ENCODE measurements at regions of chr15 and their contacts with region 1.

Region 1: DNA sequence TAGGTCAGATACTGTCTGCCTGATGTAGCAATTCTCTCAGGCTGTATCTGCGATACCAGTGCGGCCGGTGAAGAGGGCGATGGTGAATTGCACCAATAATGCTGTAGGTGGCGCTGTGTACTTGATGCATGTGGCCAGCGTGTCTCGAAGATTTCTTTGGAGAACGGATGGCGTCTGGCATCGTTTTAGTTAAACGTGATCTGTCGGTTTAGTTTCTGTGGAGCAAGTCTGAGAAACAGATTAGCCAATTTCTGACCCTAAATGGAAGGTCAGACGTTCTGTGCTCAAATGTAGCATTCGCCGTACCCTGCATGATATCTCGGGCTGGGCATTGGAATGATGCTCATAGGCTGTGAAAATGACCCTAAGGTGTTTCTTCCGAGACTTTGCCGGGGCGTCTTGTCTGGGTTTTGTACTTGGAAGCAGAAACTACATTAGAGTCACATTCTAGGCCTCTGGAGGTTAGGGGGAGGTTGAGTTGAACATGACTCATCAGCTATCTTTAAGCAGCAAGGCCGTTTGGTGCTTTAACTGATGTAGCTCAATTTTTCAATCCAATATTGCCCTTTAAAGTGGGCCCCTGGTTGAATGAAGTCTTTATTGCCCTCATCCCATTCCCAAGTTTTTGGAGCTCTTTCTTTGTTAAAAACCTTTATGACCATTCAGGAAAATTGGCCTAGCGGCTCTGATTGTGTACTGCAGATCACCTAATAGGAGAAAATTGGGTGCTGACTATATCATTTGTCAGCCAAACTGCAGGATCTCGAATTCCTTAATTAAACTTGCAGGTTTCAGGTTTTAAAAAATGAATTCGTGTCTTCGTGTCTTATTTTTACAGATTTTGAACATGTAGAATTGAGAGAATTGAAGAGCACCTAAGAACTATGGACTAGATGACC is 80.0 kb downstream of the SQOR start:
- DNase-seq: peak; percentile 69
- H3K4me3 ChIP-seq: peak overlapping the region in 1 of 3 experiments; percentile 29
- H3K27ac ChIP-seq: no peak overlapping the region
- H3K4me1 ChIP-seq: peaks cover 7% of the 10 kb centered on the region
- H3K27me3 ChIP-seq: no peaks in the 10 kb centered on the region
- CTCF ChIP-seq: peak; percentile 85 to 92
- POLR2A ChIP-seq: no peak

Region 2: DNA sequence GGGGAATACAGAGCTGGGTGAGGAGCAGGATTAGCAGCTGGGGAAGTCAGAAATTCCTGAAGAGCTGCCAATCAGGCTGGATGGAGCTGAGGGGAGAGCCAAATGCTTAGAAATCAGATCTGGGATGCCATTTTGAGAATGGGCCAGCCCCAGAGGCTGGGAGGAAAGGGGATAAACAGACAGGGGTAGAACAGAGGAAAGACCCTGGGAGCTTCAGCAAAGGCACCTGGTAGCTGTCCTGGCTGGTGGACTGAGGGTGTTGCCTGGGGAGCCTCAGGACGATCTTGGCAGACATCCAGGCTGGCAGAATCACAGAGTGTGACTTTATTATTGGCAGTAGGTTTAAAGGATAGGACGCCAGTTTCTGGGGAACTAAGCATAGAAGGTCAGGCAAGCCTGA is 17.8 kb after region 1 on chr15:
- CTCF ChIA-PET with region 1: interaction called, 11 read pairs
- POLR2A ChIA-PET with region 1: no interaction called
- dilution Hi-C with region 1: no loop called
- intact Hi-C with region 1: no loop called
- DNase-seq: no peak
- H3K4me3 ChIP-seq: no peak overlapping the region
- H3K27ac ChIP-seq: no peak overlapping the region
- H3K4me1 ChIP-seq: no peaks in the 10 kb centered on the region
- H3K27me3 ChIP-seq: peaks cover 3% of the 10 kb centered on the region in 2 experiments
- CTCF ChIP-seq: no peak
- POLR2A ChIP-seq: no peak

Region 3: GRCh38 chr15:45790325-45790943 is 75.6 kb after region 1 on chr15:
- CTCF ChIA-PET with region 1: interaction called, 14 read pairs
- POLR2A ChIA-PET with region 1: no interaction called
- dilution Hi-C with region 1: no loop called
- intact Hi-C with region 1: loop called (anchors 1 kb)
- DNase-seq: peak; percentile 25
- H3K4me3 ChIP-seq: no peak overlapping the region
- H3K27ac ChIP-seq: no peak overlapping the region
- H3K4me1 ChIP-seq: no peaks in the 10 kb centered on the region
- H3K27me3 ChIP-seq: peaks cover 10 to 12% of the 10 kb centered on the region in 2 experiments
- CTCF ChIP-seq: peak; percentile 31 to 48
- POLR2A ChIP-seq: no peak

Region 4: GRCh38 chr15:46280762-46281542 is 566.1 kb after region 1 on chr15:
- CTCF ChIA-PET with region 1: interaction called, 7 read pairs
- POLR2A ChIA-PET with region 1: no interaction called
- dilution Hi-C with region 1: no loop called
- intact Hi-C with region 1: loop called (anchors 2 kb)
- DNase-seq: peak; percentile 61
- H3K4me3 ChIP-seq: no peak overlapping the region
- H3K27ac ChIP-seq: no peak overlapping the region
- H3K4me1 ChIP-seq: no peaks in the 10 kb centered on the region
- H3K27me3 ChIP-seq: no peaks in the 10 kb centered on the region
- CTCF ChIP-seq: peak; percentile 12 to 34
- POLR2A ChIP-seq: no peak

Measured in endothelial cell of umbilical vein (primary cell).